ENCODE measurements at regions of chr21 and their contacts with region 1.

Region 1: DNA sequence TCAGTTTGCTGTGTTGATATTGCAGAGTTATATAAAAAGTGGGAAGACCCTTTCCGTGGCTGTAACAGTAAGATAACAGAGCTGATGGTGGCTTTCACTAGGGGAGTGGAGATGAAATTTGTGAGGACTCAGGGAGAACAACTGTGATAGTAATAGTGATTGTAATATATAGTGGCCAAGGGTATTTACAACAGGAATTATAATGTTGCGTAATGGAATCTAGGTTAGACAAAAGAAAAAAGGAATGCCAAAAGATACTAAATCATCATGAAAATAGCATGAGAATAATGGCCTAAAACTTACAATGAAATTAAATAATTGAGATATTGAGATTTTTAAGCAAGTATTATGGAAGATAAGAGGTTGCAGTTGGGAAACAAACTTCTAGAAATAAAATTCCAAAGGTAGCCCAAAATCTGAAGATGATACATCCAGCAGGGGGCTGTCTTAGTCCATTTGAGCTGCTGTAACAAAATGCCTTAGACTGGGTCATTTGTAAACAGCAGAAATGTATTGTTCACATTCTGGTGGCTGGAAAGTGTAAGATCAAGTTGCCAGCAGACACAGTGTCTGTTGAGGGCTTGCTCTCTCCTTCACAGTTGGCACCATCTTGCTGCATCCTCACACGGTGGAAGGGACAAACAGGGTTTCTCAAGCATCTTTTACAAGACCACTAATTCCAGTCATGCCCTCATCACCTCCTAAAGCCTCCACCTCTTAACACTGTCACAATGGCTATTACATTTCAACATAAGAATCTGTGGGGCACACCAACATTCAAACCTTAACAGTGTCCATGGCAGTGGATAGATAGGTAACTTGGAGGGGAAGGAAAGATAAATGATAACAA is 711.2 kb downstream of the MRPL39 start:
- DNase-seq: peak; percentile 5
- H3K4me3 ChIP-seq: no peak overlapping the region
- H3K27ac ChIP-seq: no peak overlapping the region
- H3K4me1 ChIP-seq: no peaks in the 10 kb centered on the region
- H3K27me3 ChIP-seq: no peaks in the 10 kb centered on the region
- CTCF ChIP-seq: peak; percentile 36; the same call in 1 of the 2 replicates

Region 2: DNA sequence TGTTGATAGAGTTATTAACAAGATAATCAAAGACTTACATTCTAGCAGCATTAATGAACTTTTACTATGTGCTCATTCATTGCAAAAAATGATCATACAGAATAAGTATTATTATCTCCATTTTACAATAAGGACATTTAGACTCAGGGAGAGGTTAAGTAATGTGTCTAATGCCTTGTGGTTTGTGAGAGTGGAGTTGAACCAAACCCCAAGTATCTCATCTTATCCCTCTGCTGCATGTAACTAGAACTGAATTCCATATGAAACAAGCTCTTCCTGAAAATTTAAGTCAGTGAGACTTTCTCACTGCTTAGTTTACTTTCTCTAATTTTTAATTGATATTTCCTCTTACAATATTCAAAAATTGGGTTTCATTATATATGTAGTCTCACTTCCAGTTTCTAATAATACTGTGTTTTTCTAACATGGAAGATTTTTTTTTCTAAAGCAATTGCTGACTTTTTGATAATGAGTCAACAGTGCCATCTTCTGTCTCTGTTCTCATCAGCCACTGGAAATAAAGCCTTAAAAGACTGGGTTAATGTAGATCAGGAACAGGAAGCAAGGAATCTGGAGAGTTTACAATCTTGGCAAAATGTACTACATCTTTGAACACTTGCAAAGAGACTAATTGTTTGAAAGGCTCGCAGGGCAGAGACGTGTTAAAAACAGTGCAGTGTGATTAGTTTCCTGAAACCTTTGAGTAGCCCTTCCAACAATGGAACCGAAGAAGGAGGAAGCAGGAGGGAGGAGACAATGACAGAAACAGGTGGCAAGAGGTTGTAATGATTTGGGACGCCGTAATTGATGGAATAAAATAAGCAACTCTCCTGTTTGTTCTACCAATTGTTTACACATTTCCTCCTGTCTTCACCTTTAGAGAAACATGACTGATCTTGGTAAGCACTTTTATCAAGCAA is 143.6 kb after region 1 on chr21:
- CTCF ChIA-PET with region 1: no interaction called
- POLR2A ChIA-PET with region 1: no interaction called
- intact Hi-C with region 1: loop called (anchors 5 kb)
- DNase-seq: peak; percentile 22
- H3K4me3 ChIP-seq: no peak overlapping the region
- H3K27ac ChIP-seq: no peak overlapping the region
- H3K4me1 ChIP-seq: no peaks in the 10 kb centered on the region
- H3K27me3 ChIP-seq: no peaks in the 10 kb centered on the region
- CTCF ChIP-seq: peak; percentile 47

Region 3: DNA sequence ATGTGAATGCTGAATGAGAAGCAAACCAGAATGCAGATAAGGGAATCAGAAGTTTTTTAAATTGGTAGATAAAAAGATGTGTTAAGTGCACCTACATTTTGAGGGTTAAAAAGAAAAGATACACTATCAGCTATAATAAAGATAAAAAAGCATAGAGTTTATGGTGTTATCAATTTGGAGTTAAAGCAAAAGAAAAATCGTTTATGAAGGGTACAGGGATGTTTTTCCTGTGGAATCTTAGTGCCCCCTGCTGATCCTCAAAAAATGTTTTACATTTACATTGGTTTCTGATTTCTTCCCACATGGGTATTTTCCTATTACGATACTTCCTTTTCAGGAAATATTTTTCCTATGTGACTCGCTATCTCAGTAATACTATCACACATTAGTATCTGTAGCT is 417.7 kb after region 1 on chr21:
- CTCF ChIA-PET with region 1: no interaction called
- POLR2A ChIA-PET with region 1: no interaction called
- intact Hi-C with region 1: loop called (anchors 10 kb)
- DNase-seq: peak; percentile 11
- H3K4me3 ChIP-seq: no peak overlapping the region
- H3K27ac ChIP-seq: no peak overlapping the region
- H3K4me1 ChIP-seq: no peaks in the 10 kb centered on the region
- H3K27me3 ChIP-seq: no peaks in the 10 kb centered on the region
- CTCF ChIP-seq: peak; percentile 26; the same call in 1 of the 2 replicates

Measured in A673 (cell line).